OCI-LY7 (cell line): ENCODE measurements at regions of chr15 and their contacts with region 1.

Region 1: DNA sequence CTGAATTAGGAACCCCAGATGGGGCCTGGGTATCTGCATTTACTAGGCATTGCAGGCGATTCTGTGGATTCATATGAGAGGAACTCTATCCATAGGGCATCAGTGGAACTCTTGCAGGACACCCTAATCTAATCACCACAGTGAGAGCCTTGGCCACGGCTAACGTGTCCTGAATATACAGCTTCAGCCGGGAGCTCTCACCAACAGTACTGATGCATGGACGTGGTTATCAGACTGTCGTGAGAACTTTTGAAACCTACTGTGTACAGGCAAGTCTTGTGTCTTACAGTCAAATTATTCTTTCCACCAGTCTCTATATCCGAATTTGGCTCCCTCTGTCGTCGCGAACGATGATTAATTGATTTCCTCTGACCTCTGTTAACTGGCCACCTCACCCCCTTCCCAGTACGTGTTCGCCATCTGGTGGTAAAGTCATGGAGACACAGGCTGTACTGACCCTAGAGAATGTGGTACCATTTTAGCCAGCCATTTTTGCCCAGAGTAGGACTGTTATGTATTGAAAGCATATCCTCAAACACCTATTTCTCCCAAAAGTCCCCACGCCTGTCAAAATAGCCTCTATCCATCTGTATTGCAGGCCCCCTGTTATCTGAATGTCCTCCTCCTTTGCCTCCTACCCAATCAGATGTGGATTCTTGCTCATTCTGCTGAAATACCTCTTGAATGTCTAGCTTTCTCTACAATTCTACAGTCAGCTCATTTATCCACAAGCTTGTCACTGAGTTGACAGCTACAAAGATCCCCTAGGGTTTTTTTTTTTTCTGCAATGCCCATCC is 39.7 kb downstream of the GLDN start:
- DNase-seq: peak; percentile 38
- H3K4me3 ChIP-seq: no peak overlapping the region
- H3K27ac ChIP-seq: no peak overlapping the region
- H3K4me1 ChIP-seq: no peaks in the 10 kb centered on the region
- CTCF ChIP-seq: peak; percentile 84

Region 2: DNA sequence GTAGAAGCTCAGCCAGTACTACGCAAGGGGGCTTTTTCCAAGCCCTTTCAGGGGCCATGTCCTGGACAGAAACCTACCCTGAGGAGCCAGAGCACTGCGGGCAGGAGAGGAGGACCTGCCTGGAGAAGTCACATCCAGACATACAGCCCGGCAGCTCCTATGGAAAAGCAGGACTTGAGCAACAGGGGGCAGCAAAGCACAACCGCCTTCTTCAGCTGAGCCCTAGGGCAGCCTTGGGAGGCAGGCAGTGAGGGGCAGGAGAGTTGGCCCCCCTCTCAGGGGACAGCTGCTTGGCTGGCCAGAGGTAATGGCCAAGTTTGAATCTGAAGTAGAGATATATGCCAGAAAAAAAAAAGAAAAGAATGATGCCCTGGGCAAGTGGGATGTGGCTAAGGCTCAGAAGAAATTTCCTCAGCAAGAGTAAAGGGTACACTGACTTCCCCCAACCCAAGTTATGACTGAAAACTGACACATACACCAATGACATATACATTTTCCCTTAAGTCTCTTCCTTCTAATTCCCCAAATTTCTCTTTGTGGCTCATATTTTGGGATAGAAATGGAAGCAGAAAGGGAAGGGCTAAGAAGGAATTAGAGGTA is 99.7 kb before region 1 on chr15:
- CTCF ChIA-PET with region 1: no interaction called
- POLR2A ChIA-PET with region 1: no interaction called
- intact Hi-C with region 1: loop called (anchors 10 kb)
- DNase-seq: peak; percentile 14
- H3K4me3 ChIP-seq: no peak overlapping the region
- H3K27ac ChIP-seq: no peak overlapping the region
- H3K4me1 ChIP-seq: peaks cover 5% of the 10 kb centered on the region
- CTCF ChIP-seq: peak; percentile 67